Caco-2 (cell line): ENCODE measurements at regions of chr10 and their contacts with region 1.

Region 1: DNA sequence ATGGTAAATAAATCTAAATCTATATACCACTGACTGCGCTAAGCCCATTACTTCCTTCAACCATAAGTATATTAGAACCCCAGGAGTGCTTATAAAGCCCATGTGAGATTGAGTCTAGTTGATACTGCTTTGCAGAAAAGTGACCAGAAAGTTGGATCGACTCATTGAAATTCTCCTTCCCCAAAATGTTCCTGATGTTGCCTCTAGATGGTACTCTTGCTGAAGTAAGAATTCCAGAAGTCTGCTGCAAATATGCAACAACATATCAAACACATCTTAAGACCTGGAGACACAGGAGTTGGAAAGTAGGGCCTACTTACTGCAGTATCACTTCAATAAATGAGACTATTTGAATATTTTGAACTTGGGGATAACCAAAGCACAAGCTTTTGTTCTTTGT is 550.8 kb downstream of the IPMK start:
- DNase-seq: peak in 1 of 2 experiments; percentile 49
- H3K4me3 ChIP-seq: no peak overlapping the region
- H3K4me3 Mint-ChIP-seq: no peak overlapping the region
- H3K27ac Mint-ChIP-seq: no peak overlapping the region
- H3K4me1 ChIP-seq: no peaks in the 10 kb centered on the region
- H3K4me1 Mint-ChIP-seq: no peaks in the 10 kb centered on the region
- H3K27me3 ChIP-seq: no peaks in the 10 kb centered on the region
- H3K27me3 Mint-ChIP-seq: peaks cover 7% of the 10 kb centered on the region
- CTCF ChIP-seq: peak; percentile 59 to 81

Region 2: DNA sequence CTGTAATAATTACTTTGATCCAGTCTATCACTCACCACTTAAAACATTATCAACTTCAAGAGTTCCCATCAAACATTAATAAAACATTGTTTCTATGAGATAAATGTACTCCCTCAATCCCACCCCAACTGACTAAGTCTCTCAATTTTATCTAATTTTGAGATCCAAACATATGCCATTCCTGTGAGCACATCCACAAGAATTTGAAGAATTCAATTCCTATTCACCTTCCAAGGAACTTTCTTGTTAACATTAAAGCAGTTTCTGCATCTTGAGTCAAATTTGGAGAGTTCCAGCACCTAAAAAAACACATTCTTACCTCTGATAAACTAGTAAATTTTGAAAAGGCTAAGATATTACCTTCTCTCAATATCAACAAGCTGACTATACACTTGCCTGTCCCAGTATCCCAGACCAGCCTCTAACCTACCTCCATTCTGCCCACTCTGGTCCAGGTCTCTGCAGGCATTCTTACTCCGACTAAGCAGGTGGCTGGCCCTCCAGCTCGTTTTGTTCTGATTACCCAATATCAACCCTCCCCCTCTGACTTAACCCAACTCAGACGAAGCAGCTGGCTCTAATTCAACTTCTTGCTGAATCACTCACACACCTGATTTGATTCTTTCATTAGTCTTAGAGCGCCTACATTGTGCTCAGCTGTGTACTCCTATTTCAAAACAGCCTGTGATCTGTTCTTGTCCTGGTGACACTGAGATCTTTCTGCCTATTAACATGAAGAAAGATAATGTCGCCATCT is 275.6 kb after region 1 on chr10:
- CTCF ChIA-PET with region 1: no interaction called
- POLR2A ChIA-PET with region 1: no interaction called
- intact Hi-C with region 1: loop called (anchors 1 kb)
- DNase-seq: no peak
- H3K4me3 ChIP-seq: no peak overlapping the region
- H3K4me3 Mint-ChIP-seq: no peak overlapping the region
- H3K27ac Mint-ChIP-seq: peak overlapping the region; percentile 1
- H3K4me1 ChIP-seq: peaks cover 15% of the 10 kb centered on the region; the same call in 1 of the 2 replicates
- H3K4me1 Mint-ChIP-seq: peaks cover 17% of the 10 kb centered on the region
- H3K27me3 ChIP-seq: no peaks in the 10 kb centered on the region
- H3K27me3 Mint-ChIP-seq: peaks cover 2% of the 10 kb centered on the region
- CTCF ChIP-seq: no peak